ENCODE measurements at regions of chr20 and their contacts with region 1.

Region 1: GRCh38 chr20:23135449-23136420 is 49.6 kb upstream of the CD93 start:
- DNase-seq: peak; percentile 48 to 72
- H3K4me3 ChIP-seq: no peak overlapping the region
- H3K27ac ChIP-seq: no peak overlapping the region
- H3K4me1 ChIP-seq: no peaks in the 10 kb centered on the region
- H3K27me3 ChIP-seq: no peaks in the 10 kb centered on the region
- CTCF ChIP-seq: no peak

Region 2: DNA sequence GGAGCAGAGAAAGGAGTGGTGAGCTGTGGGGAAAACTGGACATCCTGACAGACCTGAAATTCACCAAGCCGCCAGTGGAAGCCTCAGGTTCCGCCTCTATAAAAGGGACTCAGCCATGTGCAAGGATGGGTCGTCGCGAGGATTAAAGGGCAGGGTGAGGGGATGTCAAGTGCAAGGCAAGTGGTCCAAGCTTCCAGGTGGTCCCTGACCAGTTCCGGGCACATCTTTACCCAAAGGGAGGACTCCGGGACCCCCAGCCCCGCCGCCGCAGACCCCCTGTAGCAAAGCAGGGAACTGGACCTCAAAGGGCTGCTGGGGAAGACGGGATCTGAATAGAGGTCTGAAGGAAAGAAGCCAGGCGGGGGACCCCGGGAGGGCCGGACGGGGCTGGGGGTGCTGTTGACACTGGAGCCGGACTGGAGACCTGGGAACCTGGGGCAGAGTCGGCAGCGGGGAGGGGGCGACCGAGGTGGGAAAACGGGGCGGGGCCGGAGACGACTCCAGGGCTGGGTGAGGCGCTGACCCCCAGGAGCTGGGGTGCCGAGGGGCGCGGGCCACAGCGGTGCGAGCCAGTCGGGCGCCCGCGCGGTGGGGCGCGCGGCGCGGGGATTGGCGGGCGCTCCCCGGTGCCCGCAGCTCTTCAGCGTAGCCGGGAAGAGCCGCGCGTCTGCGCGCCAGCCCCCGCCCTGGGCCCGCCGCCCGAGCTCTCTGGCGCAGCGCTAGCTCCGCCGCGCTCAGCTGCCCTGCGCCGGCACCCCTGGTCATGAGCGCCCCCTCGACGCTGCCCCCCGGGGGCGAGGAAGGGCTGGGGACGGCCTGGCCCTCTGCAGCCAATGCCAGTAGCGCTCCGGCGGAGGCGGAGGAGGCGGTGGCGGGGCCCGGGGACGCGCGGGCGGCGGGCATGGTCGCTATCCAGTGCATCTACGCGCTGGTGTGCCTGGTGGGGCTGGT is 100.7 kb before region 1 on chr20 and contains the start of gene SSTR4:
- intact Hi-C with region 1: no loop called
- DNase-seq: no peak
- H3K4me3 ChIP-seq: peak within 1 kb of the TSS in 1 of 2 donors; percentile 40
- H3K27ac ChIP-seq: no peak within 1 kb of the TSS
- H3K4me1 ChIP-seq: peaks cover 0 to 8% (median 5%) of the 10 kb centered on the region in 4 donors
- H3K27me3 ChIP-seq: peaks cover 0 to 26% of the 10 kb centered on the region in 2 donors
- CTCF ChIP-seq: no peak

Region 3: DNA sequence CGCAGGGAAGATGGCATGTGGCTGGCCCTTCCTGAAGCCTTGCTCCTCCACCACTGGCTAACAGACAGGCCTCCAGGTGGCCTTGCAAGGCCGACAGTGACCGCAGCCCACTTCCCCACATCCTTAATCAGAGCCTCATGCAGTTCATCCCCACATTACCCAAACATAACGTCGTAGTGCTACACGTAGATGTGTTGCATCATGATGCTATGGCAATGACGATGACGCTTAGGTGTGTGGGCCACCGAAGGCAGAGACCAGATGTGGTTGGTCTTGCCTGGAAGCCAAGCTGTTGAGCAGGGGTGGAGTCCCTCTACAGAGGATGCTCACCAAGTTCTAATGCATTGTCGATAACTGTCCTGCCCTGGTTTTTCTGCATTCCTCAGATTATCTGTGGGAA is 55.2 kb before region 1 on chr20:
- intact Hi-C with region 1: loop called (anchors 2 kb)
- DNase-seq: no peak
- H3K4me3 ChIP-seq: no peak overlapping the region
- H3K27ac ChIP-seq: no peak overlapping the region
- H3K4me1 ChIP-seq: peaks cover 0 to 55% (median 25%) of the 10 kb centered on the region in 4 donors
- H3K27me3 ChIP-seq: no peaks in the 10 kb centered on the region
- CTCF ChIP-seq: no peak

Region 4: DNA sequence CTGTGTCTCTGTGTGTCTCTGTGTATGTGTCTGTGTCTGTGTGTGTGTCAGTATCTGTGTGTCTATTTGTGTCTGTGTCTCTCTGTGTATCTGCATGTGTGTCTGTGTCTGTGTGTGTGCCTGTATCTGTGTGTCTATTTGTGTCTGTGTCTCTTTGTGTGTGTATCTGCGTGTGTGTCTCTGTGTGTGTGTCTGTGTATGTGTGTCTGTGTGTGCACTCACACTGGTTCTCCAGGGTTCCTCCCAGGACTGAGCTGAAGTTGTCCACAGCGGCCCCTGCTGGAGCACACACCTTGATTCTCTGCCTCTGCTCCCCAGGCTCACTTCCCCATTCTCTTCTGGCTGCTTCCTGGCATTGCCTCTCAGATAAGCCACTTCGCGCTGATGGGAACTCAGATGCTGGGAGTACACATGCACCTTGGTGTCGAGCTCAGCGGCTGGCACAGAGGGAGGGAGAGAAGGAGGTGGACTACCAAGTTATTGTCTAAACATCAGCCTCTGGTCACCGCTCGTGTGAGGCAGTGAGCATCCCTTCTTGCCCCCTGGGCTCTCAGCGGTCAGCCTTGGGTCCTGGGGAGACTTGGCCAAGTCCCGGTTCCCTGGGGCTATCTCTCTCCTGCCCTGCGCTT is 109.9 kb after region 1 on chr20:
- intact Hi-C with region 1: no loop called
- DNase-seq: peak; percentile 58 to 77
- H3K4me3 ChIP-seq: no peak overlapping the region
- H3K27ac ChIP-seq: no peak overlapping the region
- H3K4me1 ChIP-seq: peaks cover 0 to 19% (median 2%) of the 10 kb centered on the region in 4 donors
- H3K27me3 ChIP-seq: no peaks in the 10 kb centered on the region
- CTCF ChIP-seq: peak; percentile 24 to 39